ENCODE measurements at regions of chr3 and their contacts with region 1.

Region 1: GRCh38 chr3:8501371-8502131 is at the start of gene LMCD1:
- DNase-seq: peak in 1 of 2 donors; percentile 98
- H3K4me3 ChIP-seq: peak within 1 kb of the TSS; percentile 45 to 48
- H3K27ac ChIP-seq: peak within 1 kb of the TSS; percentile 81
- H3K4me1 ChIP-seq: peaks cover 57% of the 10 kb centered on the region
- H3K27me3 ChIP-seq: no peaks in the 10 kb centered on the region
- CTCF ChIP-seq: no peak
- POLR2A ChIP-seq: peak in 1 of 2 donors; percentile 12
- total RNA-seq, gene LMCD1: 78.3 TPM

Region 2: GRCh38 chr3:8413337-8413926 is 88.1 kb before region 1 on chr3:
- intact Hi-C with region 1: no loop called
- DNase-seq: no peak
- H3K4me3 ChIP-seq: no peak overlapping the region
- H3K27ac ChIP-seq: no peak overlapping the region
- H3K4me1 ChIP-seq: no peaks in the 10 kb centered on the region
- H3K27me3 ChIP-seq: no peaks in the 10 kb centered on the region
- CTCF ChIP-seq: no peak
- POLR2A ChIP-seq: no peak

Region 3: GRCh38 chr3:8555113-8555661 is 53.6 kb after region 1 on chr3:
- intact Hi-C with region 1: loop called (anchors 10 kb)
- DNase-seq: no peak
- H3K4me3 ChIP-seq: no peak overlapping the region
- H3K27ac ChIP-seq: peak overlapping the region; percentile 72
- H3K4me1 ChIP-seq: peaks cover 73% of the 10 kb centered on the region
- H3K27me3 ChIP-seq: no peaks in the 10 kb centered on the region
- CTCF ChIP-seq: no peak
- POLR2A ChIP-seq: no peak